AG04450 (cell line): ENCODE measurements at regions of chr2 and their contacts with region 1.

Region 1: GRCh38 chr2:44392338-44392943 is 30.7 kb downstream of the CAMKMT start:
- DNase-seq: no peak
- H3K4me3 ChIP-seq: no peak overlapping the region
- H3K27ac ChIP-seq: no peak overlapping the region
- H3K27me3 ChIP-seq: no peaks in the 10 kb centered on the region
- CTCF ChIP-seq: peak; percentile 68

Region 2: DNA sequence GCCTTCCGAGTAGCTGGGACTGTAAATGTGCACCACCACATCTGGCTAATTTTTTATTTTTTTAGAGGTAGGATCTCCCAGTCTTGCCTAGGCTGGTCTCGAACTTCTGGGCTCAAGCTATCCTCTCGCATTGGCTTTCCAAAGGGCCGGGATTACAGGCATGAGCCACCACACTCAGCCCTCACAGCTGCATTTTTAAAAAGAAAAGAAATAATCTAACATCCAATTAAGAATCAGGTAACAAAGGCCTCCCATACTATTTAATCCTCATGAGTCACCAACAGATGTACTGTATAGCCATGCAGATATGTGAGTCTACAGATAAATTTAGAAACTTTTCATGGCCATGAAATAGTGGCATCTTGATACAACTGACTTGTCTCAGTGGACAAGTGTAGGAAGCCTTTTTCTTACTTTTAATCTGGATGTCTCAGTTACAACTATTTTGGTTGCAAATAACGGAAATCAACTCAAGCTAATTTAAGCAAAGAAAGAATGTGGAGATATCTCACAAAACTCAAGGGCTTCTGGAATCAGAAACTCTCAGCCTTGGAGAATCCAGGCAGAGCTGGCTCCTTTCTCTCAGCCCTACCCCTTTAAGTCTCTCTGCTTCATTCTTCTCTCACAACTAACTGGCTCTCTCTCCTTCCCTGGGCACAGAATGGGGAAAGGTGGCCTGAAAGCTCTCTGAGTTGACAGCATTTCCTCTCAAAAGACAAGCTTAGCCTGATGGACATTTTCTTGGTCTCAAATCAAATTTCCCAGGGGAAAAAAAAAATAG is 236.6 kb before region 1 on chr2:
- CTCF ChIA-PET with region 1: no interaction called
- POLR2A ChIA-PET with region 1: no interaction called
- DNase-seq: no peak
- H3K4me3 ChIP-seq: no peak overlapping the region
- H3K27ac ChIP-seq: peak overlapping the region; percentile 31
- H3K27me3 ChIP-seq: no peaks in the 10 kb centered on the region
- CTCF ChIP-seq: no peak

Region 3: GRCh38 chr2:44275927-44276303 is 116.5 kb before region 1 on chr2:
- CTCF ChIA-PET with region 1: interaction called, 10 read pairs
- POLR2A ChIA-PET with region 1: no interaction called
- DNase-seq: no peak
- H3K4me3 ChIP-seq: no peak overlapping the region
- H3K27ac ChIP-seq: no peak overlapping the region
- H3K27me3 ChIP-seq: peaks cover 1% of the 10 kb centered on the region
- CTCF ChIP-seq: no peak

Region 4: GRCh38 chr2:44314362-44314761 is 78.1 kb before region 1 on chr2:
- CTCF ChIA-PET with region 1: no interaction called
- POLR2A ChIA-PET with region 1: no interaction called
- DNase-seq: no peak
- H3K4me3 ChIP-seq: no peak overlapping the region
- H3K27ac ChIP-seq: no peak overlapping the region
- H3K27me3 ChIP-seq: no peaks in the 10 kb centered on the region
- CTCF ChIP-seq: no peak

Region 5: GRCh38 chr2:44348400-44348799 is 44.0 kb before region 1 on chr2:
- CTCF ChIA-PET with region 1: interaction called, 11 read pairs
- POLR2A ChIA-PET with region 1: no interaction called
- DNase-seq: no peak
- H3K4me3 ChIP-seq: no peak overlapping the region
- H3K27ac ChIP-seq: no peak overlapping the region
- H3K27me3 ChIP-seq: no peaks in the 10 kb centered on the region
- CTCF ChIP-seq: no peak

Region 6: DNA sequence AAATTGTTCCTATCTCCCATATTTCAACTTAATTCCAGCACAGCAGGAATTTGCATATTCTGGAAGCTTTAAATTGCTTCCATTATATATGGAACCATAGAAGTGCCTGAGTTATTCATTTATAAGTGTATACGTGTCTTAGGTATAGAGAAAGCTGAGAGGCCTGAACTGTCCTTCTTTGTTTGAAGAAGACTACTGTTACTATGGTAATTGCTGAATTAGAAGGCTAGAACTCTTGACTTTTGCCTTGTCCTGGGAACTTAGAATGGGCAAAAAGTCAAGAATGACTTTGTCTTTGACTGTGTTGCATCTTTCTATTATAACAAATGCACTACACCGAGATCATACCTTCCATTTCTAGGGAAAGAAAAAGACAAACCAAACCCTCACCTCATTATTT is 15.0 kb before region 1 on chr2:
- CTCF ChIA-PET with region 1: interaction called, 19 read pairs
- POLR2A ChIA-PET with region 1: no interaction called
- DNase-seq: no peak
- H3K4me3 ChIP-seq: no peak overlapping the region
- H3K27ac ChIP-seq: no peak overlapping the region
- H3K27me3 ChIP-seq: no peaks in the 10 kb centered on the region
- CTCF ChIP-seq: no peak

Region 7: GRCh38 chr2:44804406-44805265 is 412.2 kb after region 1 on chr2:
- CTCF ChIA-PET with region 1: no interaction called
- POLR2A ChIA-PET with region 1: no interaction called
- DNase-seq: no peak
- H3K4me3 ChIP-seq: no peak overlapping the region
- H3K27ac ChIP-seq: no peak overlapping the region
- H3K27me3 ChIP-seq: peaks cover 77% of the 10 kb centered on the region
- CTCF ChIP-seq: no peak

Region 8: DNA sequence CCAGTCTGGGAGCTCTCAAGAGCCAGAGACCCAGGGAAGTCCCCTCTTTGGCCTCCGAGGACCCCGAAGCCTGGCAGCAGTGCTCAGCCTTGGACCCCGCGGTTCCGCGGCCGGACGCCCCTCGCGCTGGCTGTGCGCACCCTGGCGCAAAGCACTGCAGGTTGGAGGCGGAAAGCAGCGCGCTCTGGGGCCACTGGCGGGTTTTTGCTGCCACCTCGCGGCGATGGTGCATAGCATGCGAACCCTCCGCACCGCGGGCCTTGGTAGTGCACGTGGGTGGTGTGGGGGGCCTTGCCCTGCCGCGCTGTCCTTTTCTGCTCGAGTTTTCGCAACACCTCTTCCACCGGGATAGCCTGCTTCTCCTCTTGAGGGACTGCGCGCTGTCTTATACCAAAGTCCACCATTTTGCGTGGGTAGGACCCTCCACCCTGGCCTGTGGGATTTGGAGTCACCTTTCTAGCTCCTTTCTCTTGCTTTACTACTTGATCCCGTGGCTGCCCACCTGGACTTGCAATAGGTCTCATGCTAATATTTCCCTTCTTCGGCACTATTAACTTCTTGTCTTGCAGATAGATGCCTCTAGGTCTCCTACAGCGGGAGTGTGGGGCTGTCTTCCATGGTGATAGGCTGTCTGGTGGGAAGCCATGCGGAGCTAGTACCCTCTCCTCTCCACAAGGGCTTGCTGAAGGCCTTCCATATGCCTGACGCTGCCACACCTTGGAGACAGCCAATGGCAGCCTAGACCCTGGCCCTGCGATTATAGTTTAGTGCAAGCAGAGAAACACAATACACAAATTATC is 563.4 kb after region 1 on chr2:
- CTCF ChIA-PET with region 1: interaction called, 72 read pairs
- POLR2A ChIA-PET with region 1: no interaction called
- DNase-seq: peak; percentile 18
- H3K4me3 ChIP-seq: 0 out of 2 replicates have a peak overlapping the region, but pooled peaks have one; percentile 4
- H3K27ac ChIP-seq: no peak overlapping the region
- H3K27me3 ChIP-seq: peaks cover 53% of the 10 kb centered on the region
- CTCF ChIP-seq: peak; percentile 85

Region 9: GRCh38 chr2:45102141-45102540 is 709.7 kb after region 1 on chr2:
- CTCF ChIA-PET with region 1: no interaction called
- POLR2A ChIA-PET with region 1: no interaction called
- DNase-seq: no peak
- H3K4me3 ChIP-seq: no peak overlapping the region
- H3K27ac ChIP-seq: no peak overlapping the region
- H3K27me3 ChIP-seq: peaks cover 12% of the 10 kb centered on the region
- CTCF ChIP-seq: no peak